Natural killer cell (primary cell): ENCODE measurements at regions of chr1 and their contacts with region 1.

Region 1: DNA sequence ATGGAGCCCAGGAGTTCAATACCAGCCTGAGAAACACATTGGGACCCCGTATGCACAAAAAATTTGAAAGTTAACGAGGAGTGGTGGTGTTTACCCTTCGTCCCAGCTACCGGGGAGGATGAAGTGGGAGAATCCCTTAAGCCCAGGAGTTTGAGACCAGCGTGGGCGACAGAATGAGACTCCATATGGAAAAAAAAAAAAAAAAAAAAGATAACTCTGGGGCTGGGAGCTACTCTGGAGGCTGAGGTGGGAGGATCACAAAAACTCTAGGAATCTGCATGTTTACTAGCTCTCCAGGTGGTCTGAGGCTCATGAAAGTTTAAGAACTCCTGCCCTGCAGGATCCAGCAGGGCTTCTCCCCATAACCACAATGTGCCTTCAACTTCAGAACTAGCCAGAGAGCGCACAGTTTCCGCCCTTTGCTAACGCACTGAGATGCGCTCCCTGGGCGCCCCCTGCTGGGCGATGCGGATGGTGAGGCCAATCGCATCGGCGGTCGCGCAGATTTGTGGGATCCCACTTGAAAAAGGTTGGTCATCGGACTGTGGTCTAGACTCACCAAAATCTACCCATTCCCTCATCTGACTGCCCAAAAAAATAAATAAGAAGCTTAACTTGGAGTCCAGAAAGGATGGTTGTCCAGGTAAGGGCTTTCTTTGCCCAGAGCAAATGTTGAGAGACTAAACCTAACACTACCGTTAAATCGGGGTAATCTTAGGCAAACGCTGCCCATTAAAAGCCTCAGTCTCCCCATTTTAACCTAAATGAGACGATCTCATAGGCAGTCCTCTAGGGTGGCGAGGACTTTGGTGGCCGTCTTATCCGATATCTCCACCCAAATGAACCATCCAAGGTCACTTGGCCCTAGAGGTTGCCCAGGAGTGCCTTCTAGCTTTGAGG is 8.8 kb downstream of the ZNF683 start:
- DNase-seq: peak; percentile 80 to 93
- ATAC-seq: peak; percentile 85 to 88 (median 86)
- H3K4me3 ChIP-seq: no peak overlapping the region
- H3K4me3 Mint-ChIP-seq: no peak overlapping the region
- H3K27ac ChIP-seq: no peak overlapping the region
- H3K27ac Mint-ChIP-seq: peak overlapping the region in 1 of 2 donors; percentile 31
- H3K4me1 ChIP-seq: peaks cover 64% of the 10 kb centered on the region
- H3K4me1 Mint-ChIP-seq: peaks cover 42 to 48% of the 10 kb centered on the region in 2 donors
- H3K27me3 ChIP-seq: peaks cover 32% of the 10 kb centered on the region
- H3K27me3 Mint-ChIP-seq: peaks cover 56 to 61% of the 10 kb centered on the region in 2 donors
- CTCF ChIP-seq: peak; percentile 99

Region 2: DNA sequence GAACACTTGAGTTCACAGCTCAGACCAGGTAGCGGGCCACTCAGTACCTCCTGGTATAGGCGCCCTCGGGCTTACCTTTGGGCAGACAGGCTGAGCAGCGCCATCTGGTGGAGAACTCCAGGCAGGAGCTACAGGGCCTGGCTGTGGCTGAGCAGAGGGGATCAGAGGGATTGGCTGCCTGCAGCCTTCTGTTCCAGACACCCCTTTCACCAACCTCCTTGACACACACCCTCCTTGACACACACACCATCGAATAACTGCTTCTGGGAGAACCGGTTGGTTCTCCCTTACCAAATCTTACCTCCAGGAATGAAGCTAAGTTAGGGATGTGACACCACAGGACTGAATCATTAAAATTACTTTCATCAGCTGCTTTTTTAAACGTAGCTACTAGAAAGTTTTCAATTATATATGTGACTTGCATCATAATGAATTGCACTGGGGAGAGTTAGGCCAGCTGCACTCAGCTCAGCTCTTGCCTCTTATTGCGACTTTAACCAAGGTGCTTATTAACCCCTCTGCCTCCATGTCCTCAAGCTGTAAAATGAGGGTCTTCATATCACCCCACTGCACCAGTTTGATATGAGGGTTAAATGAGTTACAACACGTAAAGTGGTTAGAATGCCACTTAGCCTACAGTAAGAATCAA is 53.4 kb after region 1 on chr1:
- intact Hi-C with region 1: loop called (anchors 10 kb)
- DNase-seq: peak; percentile 77 to 92
- ATAC-seq: peak; percentile 90 to 99 (median 99)
- H3K4me3 ChIP-seq: no peak overlapping the region
- H3K4me3 Mint-ChIP-seq: no peak overlapping the region
- H3K27ac ChIP-seq: no peak overlapping the region
- H3K27ac Mint-ChIP-seq: no peak overlapping the region
- H3K4me1 ChIP-seq: no peaks in the 10 kb centered on the region
- H3K4me1 Mint-ChIP-seq: no peaks in the 10 kb centered on the region
- H3K27me3 ChIP-seq: peaks cover 24% of the 10 kb centered on the region
- H3K27me3 Mint-ChIP-seq: peaks cover 38 to 47% of the 10 kb centered on the region in 2 donors
- CTCF ChIP-seq: peak; percentile 84